ENCODE measurements at regions of chr7 and their contacts with region 1.

Region 1: GRCh38 chr7:23055582-23056178 is 41.8 kb upstream of the HYCC1 start:
- DNase-seq: no peak
- ATAC-seq: peak; percentile 79

Region 2: DNA sequence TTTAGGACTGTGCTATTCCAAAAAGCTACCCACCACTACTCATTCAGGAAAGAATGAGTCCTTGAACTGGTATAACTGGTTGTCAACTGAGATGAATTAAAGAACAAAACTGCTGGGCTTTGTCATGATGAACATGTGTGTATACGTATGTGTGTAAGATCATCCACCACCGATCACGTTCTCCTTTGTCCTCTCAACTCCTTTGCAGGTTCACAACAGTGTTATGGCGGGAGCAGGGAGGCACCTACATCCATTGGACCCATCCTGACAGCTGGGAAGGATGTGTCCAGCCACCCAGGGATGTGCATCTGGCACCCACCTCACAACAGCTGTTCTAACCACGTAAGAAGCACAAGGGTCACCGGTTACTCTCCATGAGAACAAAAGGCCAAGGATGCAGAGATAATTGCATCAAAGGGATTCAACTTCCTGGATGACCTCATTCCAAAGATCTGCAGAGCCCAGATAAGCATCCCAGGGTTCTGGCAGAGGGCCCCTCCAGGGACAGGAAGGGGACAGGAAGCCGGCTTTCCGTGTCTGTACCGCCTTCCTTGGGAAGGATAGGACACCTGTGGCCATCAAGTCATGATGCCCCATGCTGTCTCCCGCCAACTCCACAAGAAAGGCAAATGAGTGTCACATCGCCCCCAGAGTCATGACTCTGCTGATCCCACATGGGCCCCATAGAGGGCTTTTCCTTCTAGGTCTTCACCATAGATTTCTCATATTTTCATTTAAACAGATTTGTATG is 621.8 kb before region 1 on chr7:
- intact Hi-C with region 1: no loop called
- DNase-seq: no peak
- ATAC-seq: peak; percentile 76

Region 3: GRCh38 chr7:22822486-22823141 is 233.1 kb before region 1 on chr7 and contains the start of gene TOMM7:
- intact Hi-C with region 1: loop called (anchors 10 kb)
- DNase-seq: peak; percentile 92
- ATAC-seq: peak; percentile 99
- total RNA-seq, gene TOMM7: 563 TPM

Region 4: DNA sequence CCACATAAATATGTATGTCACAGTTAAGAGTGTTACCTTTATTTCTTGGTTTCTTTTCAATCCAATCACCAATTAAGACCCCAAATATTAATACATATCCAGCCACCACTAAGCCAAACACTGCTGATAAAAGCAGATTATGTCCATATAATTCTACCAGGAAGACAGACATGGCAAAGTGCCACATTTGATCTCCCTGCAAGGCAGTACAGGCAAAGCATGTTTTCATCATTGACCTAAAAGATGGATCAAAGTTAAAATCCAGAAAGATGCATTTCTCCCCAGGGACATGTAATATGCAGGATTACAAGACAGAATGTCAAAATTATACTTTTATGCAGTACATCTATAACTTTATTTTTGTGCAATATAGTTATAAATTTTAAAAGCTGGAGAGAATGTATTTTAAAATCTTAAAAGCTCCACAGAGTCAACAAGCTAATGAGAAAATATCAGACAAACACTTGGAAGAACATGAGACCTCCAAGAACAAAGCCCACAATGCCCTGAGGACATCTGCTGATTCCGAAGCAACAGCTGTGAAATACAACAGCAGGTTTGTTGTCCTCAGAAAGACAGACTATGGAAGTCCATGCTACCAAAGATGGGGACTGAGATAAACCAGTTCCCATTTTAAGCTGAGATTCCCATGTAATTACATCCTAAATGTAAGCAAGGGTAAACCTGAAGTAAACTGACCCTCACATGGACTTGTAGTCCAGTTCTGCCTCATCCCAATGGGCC is 178.5 kb before region 1 on chr7:
- intact Hi-C with region 1: no loop called
- DNase-seq: no peak
- ATAC-seq: no peak

Region 5: DNA sequence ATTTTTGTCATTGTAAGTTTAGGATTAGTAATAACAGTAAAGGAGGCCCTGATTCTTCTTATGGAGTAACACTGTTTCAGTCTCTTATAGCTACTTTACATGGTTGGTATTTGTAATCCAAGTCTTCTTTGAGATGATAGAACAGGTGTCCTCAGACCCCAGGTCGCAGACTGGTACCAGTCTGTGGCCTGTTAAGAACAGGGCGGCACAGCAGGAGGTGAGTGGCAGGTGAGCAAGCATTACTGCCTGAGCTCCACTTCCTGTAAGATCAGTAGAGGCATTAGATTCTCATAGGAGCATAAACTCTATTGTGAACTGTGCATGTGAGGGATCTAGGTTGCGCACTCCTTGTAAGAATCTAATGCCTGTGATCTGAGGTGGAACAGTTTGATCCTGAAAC is 731.6 kb after region 1 on chr7:
- intact Hi-C with region 1: no loop called
- DNase-seq: no peak
- ATAC-seq: no peak

Measured in left ventricle myocardium superior (tissue), 1 donor.